ENCODE measurements at regions of chr6 and their contacts with region 1.

Region 1: GRCh38 chr6:11232193-11232769 is at the start of gene NEDD9:
- DNase-seq: peak; percentile 98
- H3K4me3 Mint-ChIP-seq: peak within 1 kb of the TSS; percentile 87
- H3K27ac Mint-ChIP-seq: peak within 1 kb of the TSS; percentile 97
- H3K4me1 Mint-ChIP-seq: peaks cover 48% of the 10 kb centered on the region
- H3K27me3 Mint-ChIP-seq: peaks cover 2% of the 10 kb centered on the region
- total RNA-seq, gene NEDD9: 17.5 to 18.8 TPM

Region 2: DNA sequence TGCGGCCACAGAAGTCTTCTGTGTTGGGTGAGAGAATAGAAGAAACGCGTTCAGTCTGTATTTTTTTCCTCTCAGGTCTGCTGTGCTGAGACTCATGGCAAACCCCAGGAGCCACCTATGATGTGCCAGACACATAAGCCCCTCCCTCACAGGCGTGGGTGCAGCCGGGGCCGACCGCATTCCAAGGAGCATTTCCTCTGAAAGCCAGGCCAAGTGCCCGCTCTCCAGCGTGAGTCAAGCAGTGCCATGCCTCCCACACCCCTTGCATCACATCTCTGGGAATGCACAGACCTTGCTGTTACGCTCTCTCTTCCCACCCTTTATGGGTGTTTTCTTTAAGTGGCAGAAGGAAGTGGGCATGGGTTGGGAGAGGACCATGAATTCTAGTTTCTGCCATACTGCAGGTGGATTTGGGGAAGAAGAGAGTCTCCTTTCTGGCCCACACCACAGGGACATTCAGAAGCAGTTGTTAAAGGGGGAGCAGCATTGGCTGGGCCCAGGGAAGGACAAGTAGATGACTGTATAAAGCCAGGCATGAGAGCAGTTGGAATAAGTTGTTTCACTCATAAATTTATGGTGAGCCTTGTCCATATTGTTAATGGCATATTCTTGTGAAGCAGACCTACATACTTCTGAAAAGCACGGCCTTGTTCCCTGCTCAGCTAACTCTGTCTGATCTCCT is 780.3 kb before region 1 on chr6:
- CTCF ChIA-PET with region 1: no interaction called
- intact Hi-C with region 1: no loop called
- DNase-seq: no peak
- H3K4me3 Mint-ChIP-seq: no peak overlapping the region
- H3K27ac Mint-ChIP-seq: no peak overlapping the region
- H3K4me1 Mint-ChIP-seq: no peaks in the 10 kb centered on the region
- H3K27me3 Mint-ChIP-seq: peaks cover 3% of the 10 kb centered on the region

Region 3: GRCh38 chr6:11172501-11173332 is 59.6 kb before region 1 on chr6:
- CTCF ChIA-PET with region 1: interaction called, 5 read pairs
- intact Hi-C with region 1: loop called (anchors 1 kb)
- DNase-seq: peak; percentile 84
- H3K4me3 Mint-ChIP-seq: no peak overlapping the region
- H3K27ac Mint-ChIP-seq: no peak overlapping the region
- H3K4me1 Mint-ChIP-seq: peaks cover 11% of the 10 kb centered on the region
- H3K27me3 Mint-ChIP-seq: no peaks in the 10 kb centered on the region

Region 4: GRCh38 chr6:11277275-11278206 is 45.3 kb after region 1 on chr6:
- CTCF ChIA-PET with region 1: no interaction called
- intact Hi-C with region 1: loop called (anchors 1 kb)
- DNase-seq: peak; percentile 48
- H3K4me3 Mint-ChIP-seq: peak overlapping the region; percentile 3
- H3K27ac Mint-ChIP-seq: peak overlapping the region; percentile 74
- H3K4me1 Mint-ChIP-seq: peaks cover 42% of the 10 kb centered on the region
- H3K27me3 Mint-ChIP-seq: no peaks in the 10 kb centered on the region

Region 5: GRCh38 chr6:11353921-11354389 is 121.7 kb after region 1 on chr6:
- CTCF ChIA-PET with region 1: interaction called, 3 read pairs
- intact Hi-C with region 1: loop called (anchors 1 kb)
- DNase-seq: peak; percentile 93
- H3K4me3 Mint-ChIP-seq: peak overlapping the region; percentile 54
- H3K27ac Mint-ChIP-seq: peak overlapping the region; percentile 96
- H3K4me1 Mint-ChIP-seq: peaks cover 82% of the 10 kb centered on the region
- H3K27me3 Mint-ChIP-seq: no peaks in the 10 kb centered on the region

Region 6: DNA sequence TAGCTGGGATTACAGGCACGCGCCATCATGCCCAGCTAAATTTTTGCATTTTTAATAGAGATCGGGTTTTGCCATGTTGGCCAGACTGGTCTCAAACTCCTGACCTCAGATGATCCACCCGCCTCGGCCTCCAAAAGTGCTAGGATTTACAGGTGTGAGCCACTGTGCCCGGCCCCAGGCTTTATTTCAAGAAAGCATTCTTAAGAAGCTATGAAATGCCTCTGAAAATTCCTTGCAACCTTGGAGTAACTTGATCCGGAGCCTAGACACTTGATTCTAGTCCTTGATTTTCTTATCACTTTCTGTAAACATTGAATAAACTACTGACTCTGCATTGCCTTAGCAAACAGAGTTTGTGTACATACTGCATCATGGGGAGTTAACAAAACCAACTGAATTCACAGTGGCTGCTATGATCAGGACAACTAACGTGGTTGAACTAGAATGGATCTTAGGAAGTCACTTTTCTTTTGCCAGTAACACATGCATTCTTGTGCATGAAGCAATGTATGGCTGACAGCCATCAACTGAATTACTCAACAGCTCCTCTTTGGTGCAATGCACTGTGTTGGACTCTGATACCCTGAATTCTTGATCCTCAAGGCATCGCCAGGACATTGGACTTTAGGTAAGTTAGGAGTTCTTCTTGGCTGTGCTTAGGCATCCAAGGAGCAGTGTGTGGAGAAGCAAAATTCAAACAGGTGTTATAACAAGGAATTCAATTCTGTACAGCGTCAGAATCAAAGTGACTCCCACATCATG is 202.5 kb after region 1 on chr6:
- CTCF ChIA-PET with region 1: no interaction called
- intact Hi-C with region 1: no loop called
- DNase-seq: no peak
- H3K4me3 Mint-ChIP-seq: no peak overlapping the region
- H3K27ac Mint-ChIP-seq: no peak overlapping the region
- H3K4me1 Mint-ChIP-seq: peaks cover 23% of the 10 kb centered on the region
- H3K27me3 Mint-ChIP-seq: no peaks in the 10 kb centered on the region

Region 7: GRCh38 chr6:11537229-11538051 is 305.2 kb after region 1 on chr6 and contains the start of gene TMEM170B:
- CTCF ChIA-PET with region 1: no interaction called
- intact Hi-C with region 1: loop called (anchors 1 kb)
- DNase-seq: peak; percentile 84
- H3K4me3 Mint-ChIP-seq: peak within 1 kb of the TSS; percentile 78
- H3K27ac Mint-ChIP-seq: no peak within 1 kb of the TSS
- H3K4me1 Mint-ChIP-seq: peaks cover 9% of the 10 kb centered on the region
- H3K27me3 Mint-ChIP-seq: peaks cover 6% of the 10 kb centered on the region
- total RNA-seq, gene TMEM170B: 0.40 to 0.57 TPM

Region 8: DNA sequence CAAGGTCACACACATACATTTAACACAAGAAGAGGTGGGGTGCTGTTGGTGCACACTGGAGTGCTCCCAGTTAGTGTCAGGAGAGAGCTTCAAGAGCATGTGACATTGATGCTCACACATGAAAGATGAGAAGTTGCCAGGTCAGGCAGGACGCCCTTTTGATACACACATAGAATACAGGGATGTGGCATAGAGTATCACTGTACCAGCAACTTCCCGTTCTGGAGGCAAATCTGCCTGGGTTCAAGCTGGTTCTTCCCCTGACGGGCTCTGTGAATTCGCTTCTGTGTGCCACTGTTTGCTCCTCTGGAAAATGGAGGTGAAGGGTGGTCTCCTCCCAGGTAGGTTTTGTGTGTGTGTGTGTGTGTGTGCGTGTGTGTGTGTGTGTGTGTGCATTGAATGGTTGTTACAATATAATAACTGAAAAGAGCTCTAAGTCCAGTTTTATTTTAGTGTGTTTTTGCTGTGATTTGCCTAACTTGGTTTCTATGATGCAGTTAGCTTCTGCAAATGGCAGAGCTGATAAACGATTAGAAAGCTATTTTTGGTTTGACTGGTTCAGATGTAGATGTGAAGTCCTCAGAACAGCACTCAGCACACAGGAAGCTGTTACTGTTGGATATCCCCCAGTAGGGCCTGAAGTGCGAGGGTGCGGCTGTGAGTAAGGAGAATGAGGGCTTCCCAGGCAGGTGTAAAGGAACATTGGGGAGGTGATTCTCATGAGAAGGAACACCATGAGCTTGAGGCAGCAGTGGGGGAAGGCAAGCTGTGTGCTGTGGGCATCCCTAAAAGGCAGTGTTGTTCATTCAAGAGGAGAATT is 833.2 kb after region 1 on chr6:
- CTCF ChIA-PET with region 1: no interaction called
- intact Hi-C with region 1: no loop called
- DNase-seq: peak; percentile 55
- H3K4me3 Mint-ChIP-seq: peak overlapping the region; percentile 1
- H3K27ac Mint-ChIP-seq: peak overlapping the region; percentile 38
- H3K4me1 Mint-ChIP-seq: peaks cover 61% of the 10 kb centered on the region
- H3K27me3 Mint-ChIP-seq: no peaks in the 10 kb centered on the region